Activated T-helper 1 cell treated with anti-CD3 and anti-CD28 coated beads, Interleukin-12 subunit alpha, Interleukin-12 subunit beta, Interleukin-2, Interleukin-4 antibody, amounts not matched to agents 30 ng/mL and 10 ng/mL and 1 ng/mL, durations not matched to agents 14 hours and 24 hours and 36 hours (primary cell): ENCODE measurements at regions of chr15 and their contacts with region 1.

Region 1: DNA sequence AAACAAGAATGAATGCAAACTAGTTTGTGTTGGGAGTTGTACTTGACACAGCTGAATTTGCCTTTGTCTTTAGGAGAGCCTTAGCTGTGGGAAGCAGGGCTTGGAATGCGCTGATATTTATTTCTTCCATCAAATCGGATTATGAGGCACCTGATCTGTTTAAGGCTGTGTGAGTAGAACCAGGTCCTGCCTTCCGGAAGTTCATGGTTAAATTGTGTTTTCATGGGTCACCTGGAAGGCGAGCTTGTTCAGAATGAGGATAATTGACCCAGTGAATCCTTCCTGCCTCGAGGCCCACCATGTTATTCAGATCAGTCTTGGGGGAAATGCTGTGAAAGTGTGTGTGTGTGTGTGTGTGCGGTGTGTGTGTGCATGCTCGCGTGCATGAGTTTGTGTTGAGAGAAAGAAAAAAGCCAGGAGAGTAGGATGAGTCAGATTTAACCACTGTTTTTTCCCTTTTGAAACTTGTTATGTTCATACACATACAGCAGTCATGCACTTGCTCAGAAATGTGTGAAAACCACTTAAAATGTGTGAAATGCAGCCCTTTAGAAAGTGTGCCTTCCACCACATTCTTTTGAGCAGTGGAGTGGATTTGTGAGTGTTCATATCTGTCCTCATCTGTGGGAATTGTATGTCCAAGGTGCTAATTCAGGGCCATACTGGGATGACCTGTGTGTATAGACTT is 36.7 kb downstream of the SMAD3 start:
- DNase-seq: peak; percentile 64
- H3K4me3 Mint-ChIP-seq: no peak overlapping the region
- H3K27ac Mint-ChIP-seq: no peak overlapping the region
- H3K4me1 Mint-ChIP-seq: peaks cover 51% of the 10 kb centered on the region
- H3K27me3 Mint-ChIP-seq: no peaks in the 10 kb centered on the region

Region 2: GRCh38 chr15:67024314-67024997 is 77.6 kb before region 1 on chr15:
- intact Hi-C with region 1: loop called (anchors 1 kb)
- DNase-seq: no peak
- H3K4me3 Mint-ChIP-seq: peak overlapping the region; percentile 29
- H3K27ac Mint-ChIP-seq: peak overlapping the region; percentile 37
- H3K4me1 Mint-ChIP-seq: peaks cover 45% of the 10 kb centered on the region
- H3K27me3 Mint-ChIP-seq: peaks cover 9% of the 10 kb centered on the region

Region 3: DNA sequence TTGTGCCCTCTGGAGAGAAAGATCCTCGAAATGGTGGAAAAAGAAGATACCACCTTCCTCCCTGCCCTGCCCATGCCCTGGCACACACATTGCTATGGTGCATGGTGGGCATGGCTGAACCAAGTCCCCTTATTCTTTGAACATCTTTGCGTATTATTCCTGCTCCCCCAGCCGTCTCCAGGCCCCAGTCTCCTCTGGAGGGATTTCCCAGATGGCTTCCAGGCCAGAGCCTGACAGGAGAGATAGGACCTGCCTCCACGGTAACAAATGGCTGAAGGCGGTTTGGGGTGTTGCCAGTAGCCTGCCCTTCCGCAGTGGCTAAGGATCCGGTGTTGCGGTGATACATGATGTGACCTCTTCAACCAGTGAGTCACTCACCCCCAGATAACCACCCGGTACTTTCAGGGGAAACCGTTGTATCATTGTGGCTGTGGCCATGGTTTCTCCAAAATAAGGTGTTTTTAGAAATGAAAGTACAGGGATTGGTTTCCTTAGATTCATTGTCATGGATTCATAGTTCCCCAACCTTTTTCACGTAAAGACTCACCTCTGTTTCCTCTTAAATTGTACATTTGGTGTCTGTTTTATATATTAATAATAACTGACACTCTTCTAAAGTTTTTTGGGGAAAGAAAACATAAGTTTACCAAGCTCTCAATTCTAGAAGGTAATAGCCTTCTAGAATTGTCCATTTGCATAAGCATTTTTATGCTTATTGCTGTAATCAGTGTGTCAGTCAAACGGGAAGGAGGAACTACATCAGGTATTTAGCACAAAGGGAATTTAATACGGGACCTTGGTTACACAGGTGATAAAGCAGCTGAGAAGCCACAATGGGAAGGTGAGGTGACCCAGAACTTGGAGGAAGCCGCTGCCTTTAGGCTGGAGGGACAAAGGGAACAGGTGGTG is 10.7 kb before region 1 on chr15:
- intact Hi-C with region 1: loop called (anchors 1 kb)
- DNase-seq: peak; percentile 84
- H3K4me3 Mint-ChIP-seq: peak overlapping the region; percentile 83
- H3K27ac Mint-ChIP-seq: peak overlapping the region; percentile 94
- H3K4me1 Mint-ChIP-seq: peaks cover 100% of the 10 kb centered on the region
- H3K27me3 Mint-ChIP-seq: no peaks in the 10 kb centered on the region

Region 4: DNA sequence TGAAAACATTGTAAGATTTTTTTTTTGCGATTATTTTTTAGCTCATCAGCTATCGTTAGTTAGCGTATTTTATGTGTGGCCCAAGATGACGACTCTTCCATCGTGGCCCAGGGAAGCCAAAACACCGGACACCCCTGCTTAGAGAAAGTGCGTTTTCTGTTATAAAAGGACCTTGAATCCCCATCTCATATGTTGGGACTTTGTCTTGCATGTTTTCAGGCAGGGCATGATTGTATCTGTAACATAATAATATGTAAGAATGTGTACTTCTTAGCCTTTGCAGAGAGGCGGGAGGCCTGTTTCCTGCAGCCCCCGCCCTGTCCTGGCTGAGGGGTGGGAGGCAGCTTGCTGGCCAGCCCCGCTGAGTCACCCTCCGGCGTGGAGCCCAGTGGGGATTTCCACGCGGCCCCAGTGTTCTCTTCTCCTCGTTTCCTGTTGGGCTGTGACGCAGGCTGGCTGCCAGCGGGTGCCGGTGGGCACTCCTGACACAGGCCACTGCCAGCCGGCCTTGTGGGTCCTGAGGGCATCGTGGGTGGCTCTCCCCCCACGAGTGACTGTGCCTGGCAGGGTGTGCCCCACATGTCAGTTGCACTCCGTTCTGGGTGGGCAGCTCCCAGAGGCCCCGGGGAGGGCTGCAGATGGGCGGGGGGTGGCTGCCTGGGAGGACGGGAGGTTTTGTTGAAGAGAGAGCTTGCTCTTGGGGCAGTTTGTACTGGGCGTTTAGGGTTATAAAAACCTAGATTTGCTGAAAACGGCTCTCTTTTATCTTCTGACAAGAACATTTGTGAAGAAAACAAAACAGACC is 19.0 kb after region 1 on chr15:
- intact Hi-C with region 1: loop called (anchors 1 kb)
- DNase-seq: peak; percentile 88
- H3K4me3 Mint-ChIP-seq: peak overlapping the region; percentile 84
- H3K27ac Mint-ChIP-seq: peak overlapping the region; percentile 97
- H3K4me1 Mint-ChIP-seq: peaks cover 95% of the 10 kb centered on the region
- H3K27me3 Mint-ChIP-seq: no peaks in the 10 kb centered on the region

Region 5: GRCh38 chr15:67150028-67150860 is 48.2 kb after region 1 on chr15:
- intact Hi-C with region 1: loop called (anchors 1 kb)
- DNase-seq: peak; percentile 21
- H3K4me3 Mint-ChIP-seq: peak overlapping the region; percentile 48
- H3K27ac Mint-ChIP-seq: peak overlapping the region; percentile 91
- H3K4me1 Mint-ChIP-seq: peaks cover 80% of the 10 kb centered on the region
- H3K27me3 Mint-ChIP-seq: no peaks in the 10 kb centered on the region

Region 6: DNA sequence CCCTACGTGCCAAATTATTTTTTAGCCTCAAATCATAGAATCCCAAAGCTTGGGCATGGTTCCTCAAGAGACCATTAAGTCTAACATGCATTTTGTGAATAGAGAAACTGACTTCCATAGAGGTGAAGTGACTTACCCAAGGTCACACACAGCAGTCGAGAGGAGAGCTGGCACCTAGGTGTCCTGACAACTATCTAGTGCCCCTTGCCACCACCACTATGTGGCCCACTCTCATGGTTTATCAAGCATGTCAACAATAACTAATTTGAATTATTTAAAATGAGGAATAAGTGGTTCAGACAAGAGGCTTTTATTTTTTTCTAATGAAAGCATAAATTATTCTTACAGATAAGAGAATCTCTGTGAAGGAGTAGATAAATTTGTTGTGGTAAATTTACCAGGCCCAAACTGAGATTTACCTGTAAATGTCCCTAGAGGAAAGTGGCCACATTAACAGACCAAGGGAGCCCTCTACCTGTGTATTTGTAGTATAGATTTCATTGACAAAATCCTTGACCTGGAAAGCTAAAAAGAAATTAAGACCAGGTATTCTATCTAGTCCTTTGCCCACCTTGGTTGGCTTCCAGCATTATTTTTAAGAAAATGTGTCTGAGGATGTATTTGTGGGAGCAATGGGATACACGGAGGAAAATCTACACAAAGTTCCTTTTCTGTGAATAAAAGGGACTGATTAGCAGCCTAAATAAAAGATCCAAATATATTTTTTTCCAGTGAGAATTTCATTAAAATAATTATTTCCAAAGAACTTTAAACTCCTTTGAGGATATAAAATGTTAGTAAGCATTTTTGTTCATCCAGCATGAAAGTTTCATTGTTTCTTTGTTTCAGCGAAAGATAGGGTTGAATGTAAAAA is 201.7 kb after region 1 on chr15:
- intact Hi-C with region 1: loop called (anchors 1 kb)
- DNase-seq: no peak
- H3K4me3 Mint-ChIP-seq: no peak overlapping the region
- H3K27ac Mint-ChIP-seq: no peak overlapping the region
- H3K4me1 Mint-ChIP-seq: peaks cover 5% of the 10 kb centered on the region
- H3K27me3 Mint-ChIP-seq: peaks cover 5% of the 10 kb centered on the region